ENCODE measurements at regions of chr13 and their contacts with region 1.

Region 1: DNA sequence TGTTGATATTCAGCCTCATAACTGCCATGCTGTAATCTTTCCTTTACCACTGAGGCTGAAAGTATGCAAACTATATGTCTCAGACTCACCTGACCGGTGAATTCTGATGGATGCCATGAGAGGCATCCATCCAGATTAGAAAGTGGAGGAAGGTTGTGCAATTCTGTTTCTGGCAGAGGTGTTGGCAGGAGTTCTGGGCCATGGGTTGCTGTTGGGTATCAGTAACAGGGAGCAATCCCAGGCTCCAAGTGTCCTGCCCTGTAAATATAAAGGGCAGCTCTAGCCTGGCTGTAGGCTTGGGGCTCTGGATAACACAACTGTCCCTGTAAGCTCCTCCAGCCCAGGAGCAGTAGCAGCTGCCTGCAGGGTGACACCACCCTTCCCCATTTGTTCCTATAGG is 77.4 kb upstream of the ABCC4 start:
- DNase-seq: no peak
- H3K27ac ChIP-seq: no peak overlapping the region
- CTCF ChIP-seq: no peak

Region 2: DNA sequence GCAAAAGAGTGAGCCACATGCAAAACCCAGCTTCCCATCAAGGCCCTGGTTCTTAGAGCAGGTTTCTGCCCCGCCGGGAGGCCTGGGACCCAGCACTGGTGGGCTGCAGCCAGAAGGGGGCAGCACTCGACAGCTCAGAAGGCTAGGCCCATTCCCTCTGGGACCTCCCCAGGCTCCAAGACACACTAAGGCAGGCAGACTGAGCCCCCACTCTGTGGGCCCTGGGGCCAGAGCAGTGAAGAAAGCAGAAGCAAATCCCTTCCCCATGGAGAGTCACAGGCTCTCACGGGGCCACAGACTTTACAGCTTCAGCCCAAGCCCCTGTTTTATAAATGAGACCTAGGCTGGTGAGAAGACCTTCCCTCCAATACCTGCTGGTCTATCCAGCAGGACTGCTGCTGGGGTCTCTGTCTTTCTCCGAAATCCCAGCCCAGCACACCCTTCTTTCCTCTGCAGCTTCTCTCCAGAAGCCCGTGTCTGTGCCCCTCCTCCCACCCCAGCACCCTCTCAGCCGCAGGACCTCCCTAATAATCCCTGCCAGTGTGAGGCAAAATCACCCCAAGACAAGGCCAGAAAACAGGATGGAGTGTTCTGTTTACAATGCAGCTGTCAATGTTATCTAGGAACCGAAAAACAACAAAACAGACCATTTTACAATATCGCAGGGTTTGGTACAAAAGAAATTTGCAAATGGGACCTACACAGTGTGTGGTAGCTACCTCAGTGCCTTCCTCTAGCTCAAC is 186.6 kb before region 1 on chr13:
- CTCF ChIA-PET with region 1: interaction called, 54 read pairs
- POLR2A ChIA-PET with region 1: no interaction called
- DNase-seq: peak; percentile 55
- H3K27ac ChIP-seq: no peak overlapping the region
- CTCF ChIP-seq: peak; percentile 82

Region 3: DNA sequence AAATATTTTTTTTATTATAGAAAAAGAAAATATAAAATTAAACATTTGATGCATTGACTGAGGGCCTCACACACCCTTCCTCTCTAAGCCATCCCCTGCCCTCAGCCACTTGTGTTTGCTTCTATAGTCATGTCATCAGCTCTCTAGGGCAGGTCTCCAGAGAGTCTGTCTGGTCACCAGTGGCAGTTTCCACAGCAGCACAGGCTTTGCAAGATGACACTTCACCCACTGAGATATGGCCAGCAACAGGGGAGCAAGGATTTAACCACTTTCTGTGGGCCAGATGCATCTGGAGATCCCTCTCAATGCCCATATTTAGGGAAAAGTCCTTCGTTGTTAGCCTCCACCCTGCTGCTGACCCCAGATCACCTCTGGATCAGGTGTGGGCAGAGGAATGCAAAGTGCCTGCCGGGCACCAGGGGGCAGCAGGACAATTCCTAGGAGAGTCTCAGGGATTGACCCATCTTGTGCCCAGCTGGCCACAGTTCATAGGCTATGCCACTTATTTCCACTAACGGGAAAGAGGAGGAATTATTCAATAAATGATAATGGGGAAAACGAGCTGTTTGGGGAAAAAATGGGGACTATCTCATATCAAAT is 82.2 kb before region 1 on chr13:
- CTCF ChIA-PET with region 1: interaction called, 13 read pairs
- POLR2A ChIA-PET with region 1: interaction called, 9 read pairs
- DNase-seq: peak; percentile 46
- H3K27ac ChIP-seq: no peak overlapping the region
- CTCF ChIP-seq: peak; percentile 53